Naive thymus-derived CD8-positive, alpha-beta T cell (primary cell): ENCODE measurements at regions of chr19 and their contacts with region 1.

Region 1: GRCh38 chr19:4791170-4792018 is at the start of gene FEM1A:
- DNase-seq: peak; percentile 94 to 100 (median 99)
- ATAC-seq: peak; percentile 93 to 95
- H3K4me3 Mint-ChIP-seq: peak within 1 kb of the TSS; percentile 77 to 92 (median 86)
- H3K27ac Mint-ChIP-seq: peak within 1 kb of the TSS; percentile 81 to 95 (median 89)
- H3K4me1 Mint-ChIP-seq: peaks cover 8 to 41% (median 32%) of the 10 kb centered on the region in 4 donors
- H3K27me3 Mint-ChIP-seq: peaks cover 0 to 2% (median 0%) of the 10 kb centered on the region in 5 donors
- polyA plus RNA-seq, gene FEM1A: 1.7 to 3.6 (median 2.5) TPM

Region 2: DNA sequence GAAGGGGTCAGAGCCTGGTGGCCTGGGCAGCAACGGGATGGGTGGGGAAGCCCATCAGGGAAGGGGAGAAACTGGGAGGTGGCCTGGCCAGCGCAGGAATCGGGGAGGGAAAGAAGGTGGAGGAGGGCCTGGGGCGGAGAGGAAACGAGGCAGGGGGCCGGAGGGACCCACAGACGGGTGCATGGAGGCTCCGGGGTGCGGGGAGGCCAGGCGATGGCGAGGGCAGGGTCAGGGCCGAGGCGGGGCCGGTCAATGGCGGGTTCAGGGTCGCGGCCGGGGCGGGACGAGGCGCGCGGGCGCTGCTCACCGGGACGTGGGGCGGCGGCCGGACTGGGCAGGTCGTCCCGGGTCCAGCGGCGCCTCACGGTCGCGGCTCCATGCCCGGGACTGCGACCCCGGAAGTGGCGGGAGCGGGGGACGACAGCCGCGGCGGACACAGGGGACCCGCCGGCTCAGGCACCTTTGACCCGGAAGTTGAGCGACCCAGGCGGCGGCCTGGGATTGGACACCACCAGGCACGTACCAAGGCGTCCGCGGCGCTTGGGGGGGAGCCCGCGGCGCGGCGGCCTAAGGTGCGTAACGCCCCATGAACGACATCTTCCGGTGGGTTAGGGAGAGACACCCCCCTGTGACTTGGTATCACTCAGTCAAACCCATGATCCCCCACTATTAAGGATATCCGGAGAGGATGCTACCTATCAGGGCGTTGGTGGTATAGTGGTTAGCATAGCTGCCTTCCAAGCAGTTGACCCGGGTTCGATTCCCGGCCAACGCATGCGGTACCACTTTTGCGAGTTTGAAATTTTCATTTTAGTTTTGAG is 67.8 kb before region 1 on chr19 and contains the start of gene DPP9:
- POLR2A ChIA-PET with region 1: interaction called, 46 read pairs
- DNase-seq: peak; percentile 93 to 100 (median 98)
- ATAC-seq: peak; percentile 91 to 92
- H3K4me3 Mint-ChIP-seq: peak within 1 kb of the TSS; percentile 91 to 98 (median 96)
- H3K27ac Mint-ChIP-seq: peak within 1 kb of the TSS; percentile 92 to 100 (median 96)
- H3K4me1 Mint-ChIP-seq: peaks cover 22 to 49% (median 44%) of the 10 kb centered on the region in 4 donors
- H3K27me3 Mint-ChIP-seq: peaks cover 0 to 8% (median 0%) of the 10 kb centered on the region in 5 donors
- polyA plus RNA-seq, gene DPP9: 16.1 to 30.6 (median 21.9) TPM

Region 3: GRCh38 chr19:4732680-4733114 is 58.7 kb before region 1 on chr19:
- POLR2A ChIA-PET with region 1: interaction called, 12 read pairs
- DNase-seq: peak; percentile 29 to 75 (median 50)
- ATAC-seq: peak; percentile 95 to 98
- H3K4me3 Mint-ChIP-seq: peak overlapping the region in 8 of 10 donors; percentile 5 to 57 (median 32)
- H3K27ac Mint-ChIP-seq: peak overlapping the region in 3 of 10 donors; percentile 7 to 58 (median 23)
- H3K4me1 Mint-ChIP-seq: peaks cover 4 to 10% (median 9%) of the 10 kb centered on the region in 4 donors
- H3K27me3 Mint-ChIP-seq: peaks cover 0 to 12% (median 4%) of the 10 kb centered on the region in 5 donors

Region 4: GRCh38 chr19:4909897-4910593 is 118.7 kb after region 1 on chr19:
- POLR2A ChIA-PET with region 1: interaction called, 19 read pairs
- DNase-seq: peak; percentile 90 to 96 (median 93)
- ATAC-seq: peak; percentile 83 to 87
- H3K4me3 Mint-ChIP-seq: peak overlapping the region; percentile 97 to 100 (median 100)
- H3K27ac Mint-ChIP-seq: peak overlapping the region in 5 of 10 donors; percentile 3 to 99 (median 67)
- H3K4me1 Mint-ChIP-seq: peaks cover 25 to 76% (median 64%) of the 10 kb centered on the region in 4 donors
- H3K27me3 Mint-ChIP-seq: no peaks in the 10 kb centered on the region

Region 5: DNA sequence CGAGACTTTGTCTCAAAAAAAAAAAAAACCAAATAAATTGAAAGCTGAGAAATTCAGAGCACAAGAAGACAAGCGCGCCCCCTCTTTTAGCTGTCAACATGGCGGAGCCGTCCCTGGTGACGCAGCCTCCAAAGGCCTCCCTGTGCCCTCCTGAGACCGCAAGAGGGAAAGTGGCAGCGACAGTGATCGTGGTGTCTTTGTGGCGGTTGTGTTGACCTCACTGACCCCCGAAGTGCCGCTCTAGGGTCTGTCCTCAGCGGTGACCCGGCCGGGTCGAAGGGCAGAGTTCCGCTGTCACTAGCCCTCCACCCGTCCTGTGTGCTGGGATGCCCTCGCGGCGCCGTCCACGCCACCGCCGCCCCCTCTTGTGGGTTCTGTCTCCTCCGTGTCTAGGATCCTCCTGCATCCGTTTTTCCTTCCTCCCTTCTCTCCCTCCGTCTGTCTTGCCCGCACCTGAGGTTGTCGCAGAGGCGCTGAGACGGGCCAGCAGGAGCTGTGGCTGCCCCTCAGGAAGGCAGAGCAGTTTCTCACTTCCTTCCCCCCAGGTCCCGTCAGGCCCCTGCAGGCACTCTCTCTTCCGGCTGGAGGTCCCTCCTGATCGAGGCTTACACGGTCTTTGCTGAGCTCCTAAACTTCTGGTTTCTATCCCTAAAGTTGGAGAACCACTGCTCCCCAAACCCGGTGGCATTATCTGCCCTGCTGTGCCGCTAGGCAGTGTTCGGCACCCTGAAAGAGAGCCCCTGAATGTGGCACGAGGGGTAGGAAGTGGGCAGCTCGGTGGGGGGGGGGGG is 125.1 kb after region 1 on chr19:
- POLR2A ChIA-PET with region 1: interaction called, 19 read pairs
- DNase-seq: peak; percentile 36 to 77 (median 58)
- ATAC-seq: peak; percentile 59 to 64
- H3K4me3 Mint-ChIP-seq: peak overlapping the region; percentile 97 to 100 (median 100)
- H3K27ac Mint-ChIP-seq: peak overlapping the region; percentile 97 to 100 (median 99)
- H3K4me1 Mint-ChIP-seq: peaks cover 19 to 55% (median 42%) of the 10 kb centered on the region in 4 donors
- H3K27me3 Mint-ChIP-seq: no peaks in the 10 kb centered on the region

Region 6: DNA sequence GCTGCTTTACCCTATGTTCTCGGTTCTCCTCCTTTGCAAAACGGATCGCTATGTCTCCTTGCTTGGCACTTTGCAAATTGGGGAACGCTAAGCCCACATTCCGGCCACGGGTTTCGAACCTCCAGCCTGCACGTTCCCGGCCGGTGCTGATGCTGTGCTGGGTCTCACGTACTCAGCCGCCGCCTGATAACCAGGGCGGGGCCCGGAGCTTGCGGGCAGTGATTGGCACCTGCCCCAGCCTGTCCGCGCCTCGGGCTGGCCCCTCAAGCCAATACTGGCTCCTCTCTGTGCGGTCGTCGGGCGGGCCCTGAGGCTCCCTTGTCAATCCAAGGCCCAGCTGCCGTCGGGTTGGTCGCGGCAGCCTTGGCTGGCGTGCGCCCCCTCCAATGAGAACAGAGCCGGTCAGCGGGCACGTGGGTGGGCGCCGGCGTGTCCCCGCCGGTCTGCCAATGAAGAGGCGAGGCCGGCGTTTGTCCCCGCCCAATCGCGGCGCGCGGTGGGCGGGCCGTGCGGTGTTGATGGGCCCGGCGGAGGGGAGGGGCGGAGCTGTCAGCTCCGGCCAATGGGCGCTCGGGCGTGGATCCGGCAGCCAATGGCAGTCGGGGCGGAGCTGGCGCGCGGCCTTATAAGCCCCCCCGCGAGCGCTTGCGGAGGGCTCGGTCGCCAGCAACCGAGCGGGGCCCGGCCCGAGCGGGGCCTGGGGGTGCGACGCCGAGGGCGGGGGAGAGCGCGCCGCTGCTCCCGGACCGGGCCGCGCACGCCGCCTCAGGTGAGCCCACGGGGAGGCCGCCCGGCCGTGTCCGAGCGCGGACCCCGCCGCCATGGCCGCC is 177.3 kb after region 1 on chr19 and contains the start of gene KDM4B:
- POLR2A ChIA-PET with region 1: interaction called, 11 read pairs
- DNase-seq: peak; percentile 94 to 100 (median 99)
- ATAC-seq: peak; percentile 93 to 94
- H3K4me3 Mint-ChIP-seq: peak within 1 kb of the TSS; percentile 83 to 97 (median 92)
- H3K27ac Mint-ChIP-seq: peak within 1 kb of the TSS; percentile 81 to 96 (median 94)
- H3K4me1 Mint-ChIP-seq: peaks cover 25 to 43% (median 35%) of the 10 kb centered on the region in 4 donors
- H3K27me3 Mint-ChIP-seq: no peaks in the 10 kb centered on the region
- polyA plus RNA-seq, gene KDM4B: 14.3 to 18.7 (median 14.7) TPM